ENCODE measurements at regions of chrX and their contacts with region 1.

Region 1: DNA sequence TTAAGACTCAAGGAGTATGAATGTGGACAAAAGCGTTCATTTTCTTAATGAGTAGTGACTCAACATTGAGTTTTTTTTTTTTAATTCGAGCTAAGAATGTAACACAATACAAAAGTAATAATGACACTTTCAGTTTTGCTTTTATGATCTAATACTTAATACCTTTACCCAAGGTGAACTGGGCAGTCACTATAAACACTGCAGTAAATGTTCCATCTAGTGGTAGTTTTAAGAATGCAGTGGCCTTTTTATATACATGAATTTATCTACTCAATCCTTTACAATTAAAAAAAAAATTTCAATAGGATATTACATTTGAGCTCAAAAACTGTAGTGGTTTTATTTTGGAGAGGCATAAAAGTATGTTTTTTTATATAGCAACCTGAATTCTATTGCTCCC is 33.9 kb downstream of the PDK3 start:
- DNase-seq: peak in 2 of 5 donors; percentile 28 to 53
- H3K4me3 ChIP-seq: no peak overlapping the region
- H3K4me3 Mint-ChIP-seq: peak overlapping the region; percentile 38 to 76 (median 61)
- H3K27ac ChIP-seq: no peak overlapping the region
- H3K27ac Mint-ChIP-seq: peak overlapping the region; percentile 29 to 96 (median 77)
- H3K4me1 ChIP-seq: peaks cover 9% of the 10 kb centered on the region
- H3K4me1 Mint-ChIP-seq: peaks cover 21 to 38% (median 32%) of the 10 kb centered on the region in 3 donors
- H3K27me3 ChIP-seq: no peaks in the 10 kb centered on the region
- H3K27me3 Mint-ChIP-seq: no peaks in the 10 kb centered on the region

Region 2: DNA sequence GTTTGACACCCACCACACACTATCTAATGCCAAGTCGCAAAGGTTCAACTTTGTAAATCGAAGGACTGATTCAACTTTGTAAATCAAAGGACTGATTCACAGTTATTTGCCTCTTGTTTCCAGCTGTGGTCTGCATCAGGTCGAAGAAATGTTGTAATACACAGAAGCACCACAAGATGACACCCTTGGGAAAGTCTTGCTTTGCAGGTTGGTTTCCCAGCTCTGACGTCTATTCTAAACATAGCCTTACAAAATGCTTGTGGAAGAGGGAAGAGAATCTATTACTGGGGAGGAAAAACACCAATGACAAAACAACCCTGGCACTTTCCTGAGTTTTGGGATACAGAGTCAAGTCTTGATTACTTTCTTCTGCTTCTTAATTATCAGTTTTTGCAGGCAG is 103.2 kb before region 1 on chrX:
- CTCF ChIA-PET with region 1: interaction called, 104 read pairs
- POLR2A ChIA-PET with region 1: no interaction called
- DNase-seq: peak; percentile 9 to 53 (median 48)
- H3K4me3 ChIP-seq: no peak overlapping the region
- H3K4me3 Mint-ChIP-seq: no peak overlapping the region
- H3K27ac ChIP-seq: no peak overlapping the region
- H3K27ac Mint-ChIP-seq: peak overlapping the region in 2 of 8 donors; percentile 4 to 49
- H3K4me1 ChIP-seq: no peaks in the 10 kb centered on the region
- H3K4me1 Mint-ChIP-seq: peaks cover 1 to 7% (median 5%) of the 10 kb centered on the region in 3 donors
- H3K27me3 ChIP-seq: no peaks in the 10 kb centered on the region
- H3K27me3 Mint-ChIP-seq: peaks cover 15 to 18% of the 10 kb centered on the region in 2 donors

Region 3: GRCh38 chrX:24410514-24411189 is 88.3 kb before region 1 on chrX:
- CTCF ChIA-PET with region 1: no interaction called
- POLR2A ChIA-PET with region 1: no interaction called
- DNase-seq: no peak
- H3K4me3 ChIP-seq: no peak overlapping the region
- H3K4me3 Mint-ChIP-seq: no peak overlapping the region
- H3K27ac ChIP-seq: no peak overlapping the region
- H3K27ac Mint-ChIP-seq: no peak overlapping the region
- H3K4me1 ChIP-seq: no peaks in the 10 kb centered on the region
- H3K4me1 Mint-ChIP-seq: no peaks in the 10 kb centered on the region
- H3K27me3 ChIP-seq: no peaks in the 10 kb centered on the region
- H3K27me3 Mint-ChIP-seq: peaks cover 2 to 3% of the 10 kb centered on the region in 2 donors

Region 4: GRCh38 chrX:24464836-24465531 is 34.0 kb before region 1 on chrX and contains the start of gene PDK3:
- CTCF ChIA-PET with region 1: interaction called, 16 read pairs
- POLR2A ChIA-PET with region 1: interaction called, 9 read pairs
- DNase-seq: peak; percentile 82 to 94 (median 90)
- H3K4me3 ChIP-seq: peak within 1 kb of the TSS; percentile 71
- H3K4me3 Mint-ChIP-seq: peak within 1 kb of the TSS; percentile 83 to 93 (median 87)
- H3K27ac ChIP-seq: peak within 1 kb of the TSS; percentile 79
- H3K27ac Mint-ChIP-seq: peak within 1 kb of the TSS; percentile 77 to 97 (median 95)
- H3K4me1 ChIP-seq: peaks cover 28% of the 10 kb centered on the region
- H3K4me1 Mint-ChIP-seq: peaks cover 38 to 43% (median 41%) of the 10 kb centered on the region in 3 donors
- H3K27me3 ChIP-seq: no peaks in the 10 kb centered on the region
- H3K27me3 Mint-ChIP-seq: peaks cover 0 to 2% of the 10 kb centered on the region in 2 donors
- total RNA-seq, gene PDK3: 26.0 to 26.4 TPM

Region 5: DNA sequence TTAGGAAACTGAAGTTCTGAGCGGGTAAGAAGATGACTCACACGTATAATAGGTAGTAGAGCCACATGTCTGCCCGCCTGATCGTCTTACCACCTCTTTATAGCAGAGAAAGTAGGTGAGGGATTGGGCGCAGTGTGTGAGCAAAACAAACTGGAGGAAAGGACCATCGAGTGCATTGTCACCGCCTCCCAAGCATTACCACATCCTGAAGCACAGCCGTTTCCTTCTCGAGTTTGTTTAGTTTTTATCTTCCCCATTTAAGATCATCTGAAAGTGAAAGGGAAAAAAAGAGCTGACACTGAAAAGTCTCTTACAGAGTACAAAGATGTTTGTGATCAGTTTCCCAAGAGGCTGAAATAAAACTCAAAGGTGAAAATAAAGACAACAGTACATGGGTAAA is 19.1 kb before region 1 on chrX:
- CTCF ChIA-PET with region 1: interaction called, 23 read pairs
- POLR2A ChIA-PET with region 1: interaction called, 3 read pairs
- DNase-seq: peak; percentile 56 to 88 (median 80)
- H3K4me3 ChIP-seq: peak overlapping the region; percentile 53
- H3K4me3 Mint-ChIP-seq: peak overlapping the region; percentile 49 to 89 (median 68)
- H3K27ac ChIP-seq: peak overlapping the region; percentile 83
- H3K27ac Mint-ChIP-seq: peak overlapping the region; percentile 76 to 99 (median 94)
- H3K4me1 ChIP-seq: peaks cover 74% of the 10 kb centered on the region
- H3K4me1 Mint-ChIP-seq: peaks cover 57 to 86% (median 81%) of the 10 kb centered on the region in 3 donors
- H3K27me3 ChIP-seq: no peaks in the 10 kb centered on the region
- H3K27me3 Mint-ChIP-seq: no peaks in the 10 kb centered on the region

Region 6: GRCh38 chrX:24515447-24515846 is 16.5 kb after region 1 on chrX:
- CTCF ChIA-PET with region 1: no interaction called
- POLR2A ChIA-PET with region 1: no interaction called
- DNase-seq: no peak
- H3K4me3 ChIP-seq: no peak overlapping the region
- H3K4me3 Mint-ChIP-seq: no peak overlapping the region
- H3K27ac ChIP-seq: no peak overlapping the region
- H3K27ac Mint-ChIP-seq: peak overlapping the region in 1 of 8 donors; percentile 32
- H3K4me1 ChIP-seq: no peaks in the 10 kb centered on the region
- H3K4me1 Mint-ChIP-seq: peaks cover 2 to 4% (median 3%) of the 10 kb centered on the region in 3 donors
- H3K27me3 ChIP-seq: no peaks in the 10 kb centered on the region
- H3K27me3 Mint-ChIP-seq: peaks cover 0 to 6% of the 10 kb centered on the region in 2 donors